ENCODE measurements at regions of chr10 and their contacts with region 1.

Region 1: DNA sequence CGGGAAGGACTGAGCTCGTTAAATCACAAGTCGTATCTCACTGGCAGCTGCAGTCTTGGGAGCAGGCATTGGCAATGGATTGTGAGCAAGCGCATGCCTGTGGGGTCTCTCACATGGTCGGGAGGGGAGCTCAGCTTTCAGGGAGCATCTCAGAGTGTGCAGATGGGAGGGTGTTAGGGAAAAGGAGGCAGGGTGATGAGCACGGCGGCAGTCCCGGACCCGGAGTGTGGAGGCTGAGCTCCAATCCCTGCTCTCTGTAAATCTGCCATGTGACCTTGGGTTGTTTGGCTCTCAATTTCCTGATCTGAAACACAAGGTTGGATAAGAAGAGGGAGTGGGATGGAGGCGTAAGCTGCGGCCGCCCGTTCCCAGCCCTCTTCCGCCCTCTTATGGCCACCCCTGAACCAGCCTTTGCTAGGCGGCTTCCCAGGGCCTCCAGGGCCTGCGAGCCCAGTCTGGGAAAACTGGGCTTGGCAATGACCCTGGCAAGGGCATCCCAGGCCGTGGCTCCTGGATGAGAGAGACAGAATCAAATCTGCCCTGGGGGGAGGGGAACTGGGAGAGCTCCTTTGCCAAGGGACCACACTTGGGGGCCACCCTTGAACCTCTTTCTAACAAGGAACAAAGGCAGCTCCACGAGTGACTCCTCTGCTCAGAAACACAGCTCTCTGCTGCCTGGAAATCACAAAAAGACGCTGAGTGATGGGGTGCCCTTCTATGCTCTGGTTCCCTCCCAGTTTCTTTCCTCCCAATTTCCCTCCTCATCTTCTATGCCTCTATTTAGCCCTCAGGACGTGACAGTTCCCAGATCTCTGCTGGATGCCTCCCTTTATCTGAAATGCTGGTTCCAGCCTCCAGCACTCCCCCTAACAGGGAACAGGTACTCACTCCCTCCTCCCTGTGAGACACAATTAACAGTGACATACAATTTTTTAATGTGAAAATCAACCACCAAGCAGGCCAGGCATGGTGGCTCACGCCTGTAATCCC is 41.7 kb upstream of the LOXL4 start:
- DNase-seq: peak; percentile 63
- H3K4me3 ChIP-seq: no peak overlapping the region
- H3K27ac ChIP-seq: no peak overlapping the region
- H3K4me1 ChIP-seq: no peaks in the 10 kb centered on the region
- H3K27me3 ChIP-seq: no peaks in the 10 kb centered on the region
- CTCF ChIP-seq: peak; percentile 34 to 91 (median 72)
- POLR2A ChIP-seq: no peak

Region 2: DNA sequence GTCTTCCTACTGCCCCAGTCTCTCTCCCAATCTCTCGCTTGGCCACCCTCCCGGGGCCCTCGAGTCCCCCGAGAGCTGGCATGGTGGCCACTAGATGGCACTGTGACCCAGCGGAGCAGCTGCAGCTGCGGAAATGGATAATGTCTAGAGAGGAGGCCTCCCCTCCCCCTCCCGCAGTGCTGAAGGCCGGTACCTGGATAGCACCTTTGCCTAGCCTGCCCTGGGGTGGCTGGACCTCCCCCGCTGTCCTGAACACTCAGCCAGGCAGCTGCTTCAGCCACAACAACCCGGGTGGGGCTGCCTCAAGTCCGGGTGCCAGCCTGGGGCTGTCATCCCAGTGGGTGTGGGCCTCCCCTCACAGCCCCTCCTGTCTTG is 394.8 kb before region 1 on chr10:
- intact Hi-C with region 1: loop called (anchors 10 kb)
- DNase-seq: peak; percentile 77
- H3K4me3 ChIP-seq: no peak overlapping the region
- H3K27ac ChIP-seq: no peak overlapping the region
- H3K4me1 ChIP-seq: no peaks in the 10 kb centered on the region
- H3K27me3 ChIP-seq: no peaks in the 10 kb centered on the region
- CTCF ChIP-seq: peak; percentile 83 to 91 (median 90)
- POLR2A ChIP-seq: no peak

Region 3: DNA sequence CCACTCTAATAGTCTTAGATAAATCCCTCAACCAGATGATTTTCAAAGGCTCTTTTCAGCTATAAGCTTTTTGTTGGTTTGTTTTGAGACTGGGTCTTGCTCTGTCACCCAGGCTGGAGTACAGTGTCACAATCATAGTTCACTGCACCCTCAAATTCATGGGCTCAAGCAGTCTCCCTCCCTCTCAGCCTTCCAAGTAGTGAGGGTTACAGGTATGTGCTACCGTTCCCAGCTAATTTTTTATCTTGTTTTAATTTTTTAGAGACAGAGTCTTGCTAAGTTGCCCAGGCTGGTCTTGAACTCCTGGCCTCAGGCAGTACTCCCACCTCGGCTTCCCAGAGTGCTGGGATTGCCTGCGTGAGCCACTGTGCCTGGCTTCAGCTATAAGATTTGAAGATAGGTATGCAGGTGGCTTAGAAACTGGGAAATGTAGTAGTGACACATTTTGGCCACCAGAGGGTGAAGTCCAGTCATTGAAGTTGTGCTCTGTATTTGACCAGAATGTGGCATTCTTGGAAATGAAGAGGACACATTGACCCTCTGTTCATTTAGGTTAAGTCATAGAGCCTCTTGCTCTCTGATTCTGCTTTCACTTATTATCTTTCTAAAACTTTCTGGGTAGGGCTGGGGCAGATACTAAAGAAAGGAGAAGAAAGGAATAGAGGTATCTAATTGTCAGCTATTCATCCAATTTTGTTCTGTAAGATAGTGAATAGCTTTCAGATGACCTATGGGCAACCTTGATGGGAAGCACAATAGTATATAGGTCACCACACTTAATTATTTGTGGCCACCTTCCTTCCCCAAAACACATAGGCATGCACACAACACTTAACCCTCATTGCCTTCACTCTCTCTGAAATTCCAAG is 139.2 kb before region 1 on chr10:
- intact Hi-C with region 1: loop called (anchors 1 kb)
- DNase-seq: peak; percentile 49
- H3K4me3 ChIP-seq: no peak overlapping the region
- H3K27ac ChIP-seq: no peak overlapping the region
- H3K4me1 ChIP-seq: no peaks in the 10 kb centered on the region
- H3K27me3 ChIP-seq: no peaks in the 10 kb centered on the region
- CTCF ChIP-seq: peak; percentile 29 to 75 (median 74)
- POLR2A ChIP-seq: no peak

Region 4: DNA sequence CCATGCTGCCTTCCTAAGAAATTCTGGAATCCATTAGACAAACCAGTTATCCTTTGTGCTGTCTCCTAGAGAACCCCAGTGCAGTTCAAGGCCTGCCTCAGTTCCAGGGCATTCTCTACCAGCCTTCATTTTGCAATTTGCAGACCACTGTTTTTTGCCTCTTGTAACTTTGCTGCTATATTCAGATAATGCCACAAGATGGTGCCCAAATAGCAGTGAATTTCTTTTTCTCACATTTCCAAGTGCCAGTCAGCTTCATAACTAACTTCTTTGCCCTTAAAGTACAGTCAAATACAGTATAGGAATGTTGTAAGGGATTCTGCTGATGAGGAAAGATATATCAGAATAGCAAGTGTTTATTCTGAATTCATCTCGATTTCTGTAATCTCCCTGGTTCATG is 66.8 kb before region 1 on chr10:
- intact Hi-C with region 1: loop called (anchors 5 kb)
- DNase-seq: no peak
- H3K4me3 ChIP-seq: no peak overlapping the region
- H3K27ac ChIP-seq: no peak overlapping the region
- H3K4me1 ChIP-seq: no peaks in the 10 kb centered on the region
- H3K27me3 ChIP-seq: no peaks in the 10 kb centered on the region
- CTCF ChIP-seq: peak in 2 of 4 experiments; percentile 41 to 58
- POLR2A ChIP-seq: no peak

Region 5: DNA sequence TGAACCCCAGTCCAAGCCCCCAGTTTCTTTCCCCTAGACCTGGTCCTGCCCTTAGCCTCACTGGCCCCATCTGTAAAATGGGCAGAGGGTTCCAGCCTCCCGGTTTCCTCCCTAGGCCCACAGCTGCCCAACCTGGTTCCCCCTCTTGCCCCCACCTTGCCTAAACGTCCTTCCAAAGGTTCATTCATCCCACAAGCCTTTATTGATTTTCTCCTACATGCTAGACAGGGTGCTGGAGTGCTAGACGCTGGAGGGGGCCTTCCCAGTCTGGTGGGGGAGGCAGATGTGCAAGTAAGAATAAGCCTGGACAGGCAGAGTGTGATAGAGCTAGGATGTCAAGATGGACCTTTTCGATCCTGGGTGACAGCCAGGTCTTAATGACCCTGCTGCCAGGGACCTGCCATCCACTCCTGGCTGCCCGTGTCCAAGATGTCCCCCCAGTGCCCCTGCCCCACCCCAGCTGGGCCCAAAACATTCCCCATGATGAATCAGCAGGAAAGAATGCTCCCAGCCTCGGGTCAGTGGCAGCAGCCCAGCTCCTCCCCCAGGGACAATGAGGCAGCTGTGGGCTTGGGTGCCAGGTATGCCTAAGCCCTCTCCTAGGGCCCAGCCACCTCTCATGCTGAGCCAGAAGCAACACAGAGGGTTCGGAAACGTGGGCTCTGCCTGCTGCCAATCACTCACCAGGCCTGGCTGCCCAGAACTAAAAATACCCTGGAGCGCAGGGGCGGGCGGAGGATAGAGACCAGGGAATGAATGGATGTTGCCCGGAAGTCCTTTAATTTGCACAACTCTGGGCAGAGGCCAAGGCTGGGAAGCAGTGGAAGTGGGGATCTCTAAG is 40.4 kb before region 1 on chr10:
- intact Hi-C with region 1: loop called (anchors 2 kb)
- DNase-seq: peak; percentile 48
- H3K4me3 ChIP-seq: no peak overlapping the region
- H3K27ac ChIP-seq: peak overlapping the region; percentile 76 to 82
- H3K4me1 ChIP-seq: peaks cover 5% of the 10 kb centered on the region
- H3K27me3 ChIP-seq: no peaks in the 10 kb centered on the region
- CTCF ChIP-seq: no peak
- POLR2A ChIP-seq: no peak